Common myeloid progenitor, CD34-positive (primary cell): ENCODE measurements at regions of chr19 and their contacts with region 1.

Region 1: GRCh38 chr19:55599468-55600279 is at the start of gene FIZ1:
- DNase-seq: peak; percentile 99 to 100 (median 100)
- H3K4me3 ChIP-seq: peak within 1 kb of the TSS; percentile 89 to 98 (median 95)
- H3K27ac ChIP-seq: peak within 1 kb of the TSS; percentile 93 to 95
- H3K4me1 ChIP-seq: peaks cover 0 to 30% (median 22%) of the 10 kb centered on the region in 4 experiments
- H3K27me3 ChIP-seq: no peaks in the 10 kb centered on the region

Region 2: GRCh38 chr19:55585658-55586339 is 13.9 kb before region 1 on chr19:
- CTCF ChIA-PET with region 1: interaction called, 6 read pairs
- POLR2A ChIA-PET with region 1: interaction called, 10 read pairs
- DNase-seq: peak; percentile 61 to 67 (median 63)
- H3K4me3 ChIP-seq: peak overlapping the region in 6 of 7 experiments; percentile 39 to 76 (median 60)
- H3K27ac ChIP-seq: no peak overlapping the region
- H3K4me1 ChIP-seq: peaks cover 0 to 35% (median 27%) of the 10 kb centered on the region in 4 experiments
- H3K27me3 ChIP-seq: no peaks in the 10 kb centered on the region